PC-9 (cell line): ENCODE measurements at regions of chr10 and their contacts with region 1.

Region 1: DNA sequence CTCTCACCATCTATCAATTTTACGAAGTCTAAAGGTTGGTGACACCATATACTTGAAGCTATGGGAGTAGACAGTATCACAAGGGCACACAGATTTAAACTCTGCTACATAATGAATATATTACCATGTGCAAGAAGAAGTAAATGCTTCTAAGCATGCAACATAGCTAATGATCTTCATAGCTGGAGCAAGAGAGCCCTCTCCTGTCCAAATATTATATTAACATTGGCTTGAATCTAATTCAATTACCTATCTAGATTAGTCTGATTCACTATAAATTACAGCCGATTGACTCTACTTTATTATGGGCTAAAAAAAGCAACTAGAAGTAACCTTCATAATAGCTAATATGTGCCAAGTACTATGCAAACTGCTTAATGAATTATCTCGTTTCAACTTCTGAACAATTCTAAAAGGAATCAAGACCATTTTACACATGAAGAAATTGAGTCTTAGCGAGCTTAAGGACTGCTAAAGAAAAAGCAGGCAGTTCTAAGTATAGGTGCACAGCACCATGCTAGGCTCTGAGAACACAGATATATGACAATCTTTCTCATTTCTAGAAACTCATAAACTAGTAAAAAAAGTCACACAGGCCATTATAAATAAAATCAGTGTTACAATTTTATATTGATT is 21.9 kb downstream of the FRA10AC1 start:
- DNase-seq: no peak
- H3K4me3 ChIP-seq: no peak overlapping the region
- H3K27ac ChIP-seq: no peak overlapping the region
- H3K4me1 ChIP-seq: no peaks in the 10 kb centered on the region
- H3K27me3 ChIP-seq: no peaks in the 10 kb centered on the region
- CTCF ChIP-seq: peak; percentile 75

Region 2: GRCh38 chr10:93363891-93364648 is 316.5 kb before region 1 on chr10:
- CTCF ChIA-PET with region 1: no interaction called
- POLR2A ChIA-PET with region 1: no interaction called
- intact Hi-C with region 1: loop called (anchors 10 kb)
- DNase-seq: peak; percentile 64 to 68
- H3K4me3 ChIP-seq: no peak overlapping the region
- H3K27ac ChIP-seq: 0 out of 2 replicates have a peak overlapping the region, but pooled peaks have one; percentile 9
- H3K4me1 ChIP-seq: no peaks in the 10 kb centered on the region
- H3K27me3 ChIP-seq: no peaks in the 10 kb centered on the region
- CTCF ChIP-seq: no peak

Region 3: GRCh38 chr10:93541402-93542357 is 138.8 kb before region 1 on chr10:
- CTCF ChIA-PET with region 1: no interaction called
- POLR2A ChIA-PET with region 1: no interaction called
- intact Hi-C with region 1: loop called (anchors 1 kb)
- DNase-seq: peak in 1 of 2 experiments; percentile 44
- H3K4me3 ChIP-seq: no peak overlapping the region
- H3K27ac ChIP-seq: no peak overlapping the region
- H3K4me1 ChIP-seq: no peaks in the 10 kb centered on the region
- H3K27me3 ChIP-seq: no peaks in the 10 kb centered on the region
- CTCF ChIP-seq: peak; percentile 62

Region 4: DNA sequence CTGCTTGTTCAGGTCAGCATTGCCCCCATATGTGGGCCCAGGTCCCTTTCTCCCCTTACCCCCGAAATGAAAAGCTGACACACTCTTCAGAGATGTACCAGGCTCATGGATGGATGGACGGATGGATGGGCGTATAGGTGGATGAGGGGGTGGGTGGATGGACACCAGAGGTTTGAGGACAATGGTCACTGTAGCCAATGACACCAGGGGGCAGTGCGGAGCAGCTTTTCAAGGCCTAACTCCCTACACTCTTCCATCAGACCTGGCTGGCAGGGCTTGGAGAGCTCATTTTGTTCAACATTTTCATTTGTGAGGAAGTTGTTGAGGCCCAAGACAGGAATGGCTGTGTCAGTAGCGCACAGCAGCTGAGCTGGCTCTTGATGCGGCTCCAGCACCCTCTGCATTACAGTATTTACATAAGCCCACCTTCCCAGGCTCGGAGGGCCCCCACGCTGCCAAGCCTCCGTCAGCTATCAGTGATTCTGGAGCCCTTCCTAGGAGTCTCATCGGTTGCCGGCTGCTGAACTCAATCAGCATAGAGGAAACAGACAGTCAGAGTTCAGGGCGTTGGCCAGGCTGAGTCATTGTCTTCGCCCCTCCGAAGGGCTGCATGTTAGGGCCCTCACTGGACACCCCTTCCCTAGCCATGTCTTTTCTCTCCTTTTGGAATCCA is 125.6 kb before region 1 on chr10:
- CTCF ChIA-PET with region 1: interaction called, 11 read pairs
- POLR2A ChIA-PET with region 1: interaction called, 3 read pairs
- intact Hi-C with region 1: loop called (anchors 1 kb)
- DNase-seq: peak; percentile 48 to 54
- H3K4me3 ChIP-seq: no peak overlapping the region
- H3K27ac ChIP-seq: no peak overlapping the region
- H3K4me1 ChIP-seq: peaks cover 12% of the 10 kb centered on the region
- H3K27me3 ChIP-seq: no peaks in the 10 kb centered on the region
- CTCF ChIP-seq: peak; percentile 69

Region 5: GRCh38 chr10:94429049-94429707 is 748.6 kb after region 1 on chr10:
- CTCF ChIA-PET with region 1: no interaction called
- POLR2A ChIA-PET with region 1: no interaction called
- intact Hi-C with region 1: no loop called
- DNase-seq: no peak
- H3K4me3 ChIP-seq: no peak overlapping the region
- H3K27ac ChIP-seq: no peak overlapping the region
- H3K4me1 ChIP-seq: no peaks in the 10 kb centered on the region
- H3K27me3 ChIP-seq: no peaks in the 10 kb centered on the region
- CTCF ChIP-seq: no peak

Region 6: GRCh38 chr10:94524146-94524545 is 843.6 kb after region 1 on chr10:
- CTCF ChIA-PET with region 1: no interaction called
- POLR2A ChIA-PET with region 1: no interaction called
- intact Hi-C with region 1: no loop called
- DNase-seq: no peak
- H3K4me3 ChIP-seq: no peak overlapping the region
- H3K27ac ChIP-seq: no peak overlapping the region
- H3K4me1 ChIP-seq: no peaks in the 10 kb centered on the region
- H3K27me3 ChIP-seq: no peaks in the 10 kb centered on the region
- CTCF ChIP-seq: no peak